Posterior vena cava (tissue), 2 donors: ENCODE measurements at regions of chr14 and their contacts with region 1.

Region 1: DNA sequence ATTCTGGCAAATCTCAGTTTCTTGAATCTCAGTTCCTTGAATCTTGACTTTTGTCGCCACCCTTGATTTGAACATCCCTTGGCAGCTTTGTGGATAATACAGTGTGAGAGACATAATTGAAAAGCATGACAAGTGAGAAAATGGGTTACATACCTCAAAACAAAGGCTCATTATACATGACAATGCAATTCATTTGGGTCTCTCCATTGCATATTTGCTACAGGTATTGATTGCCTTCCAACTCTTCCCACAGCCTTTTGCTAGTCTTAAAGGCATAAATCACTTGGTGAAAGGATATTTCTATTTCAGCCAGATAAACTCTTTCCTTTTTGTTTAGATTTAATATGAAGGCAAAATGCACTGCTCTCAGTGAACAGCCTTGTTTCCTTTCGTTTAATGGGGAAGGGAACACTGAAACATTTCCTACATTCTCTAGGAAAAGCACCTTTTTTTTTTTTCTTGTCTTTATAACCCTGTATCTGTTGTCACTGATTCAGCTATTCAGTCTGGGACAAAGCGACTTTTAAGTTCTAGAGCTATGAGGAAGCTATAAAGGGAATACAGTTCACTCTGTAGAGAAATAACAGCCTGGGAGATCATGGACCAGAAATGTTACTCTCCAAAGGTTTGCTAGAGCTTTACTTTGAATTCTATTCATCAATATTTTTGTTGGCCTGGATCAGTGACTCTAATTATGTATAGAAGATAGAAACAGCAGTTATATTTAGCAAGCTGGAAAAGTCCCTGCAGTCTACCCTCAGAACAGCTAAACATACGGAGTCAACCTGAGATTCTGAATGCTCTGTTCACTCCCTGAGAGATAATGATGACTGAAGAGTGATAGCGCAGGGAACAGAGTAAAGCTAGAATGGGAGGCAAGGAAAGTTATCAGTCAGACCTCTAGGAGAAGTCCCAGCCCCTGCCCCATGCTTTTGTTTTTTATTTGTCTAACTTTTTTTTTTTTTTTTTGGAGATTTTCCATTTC is 311.4 kb downstream of the RGS6 start:
- DNase-seq: no peak

Region 2: DNA sequence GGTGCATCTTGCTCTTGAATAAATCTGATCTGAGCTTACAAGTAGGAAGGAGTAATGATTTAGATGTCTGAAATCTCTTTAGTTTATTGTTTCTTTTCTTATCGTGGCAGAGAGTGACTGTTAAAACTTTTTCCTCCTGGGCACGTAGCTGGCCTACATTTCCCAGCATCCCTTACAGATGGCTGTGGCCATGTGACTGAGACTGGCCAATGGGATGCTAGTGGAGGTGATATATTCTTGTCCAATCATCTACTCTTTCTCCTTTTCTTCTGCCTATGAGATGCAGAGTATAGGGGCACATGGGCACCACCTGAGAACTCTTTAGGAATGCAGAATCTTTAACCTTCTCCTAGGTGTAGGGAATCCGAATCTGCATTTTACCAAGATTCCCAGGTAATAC is 74.1 kb before region 1 on chr14:
- intact Hi-C with region 1: loop called in 1 of 2 experiments (anchors 2 kb)
- DNase-seq: no peak